Motor neuron (in vitro differentiated cells): ENCODE measurements at regions of chr12 and their contacts with region 1.

Region 1: GRCh38 chr12:54005853-54006686 is 2.7 kb upstream of the HOXC8 start:
- ATAC-seq: peak; percentile 57 to 87 (median 74)
- H3K4me3 ChIP-seq: peak overlapping the region in 2 of 5 donors; percentile 5 to 19
- H3K27ac ChIP-seq: no peak overlapping the region
- H3K4me1 ChIP-seq: peaks cover 10 to 13% of the 10 kb centered on the region in 2 donors

Region 2: GRCh38 chr12:53887006-53887405 is 119.1 kb before region 1 on chr12:
- in situ Hi-C with region 1: no loop called
- ATAC-seq: peak in 1 of 8 experiments; percentile 32
- H3K4me3 ChIP-seq: no peak overlapping the region
- H3K27ac ChIP-seq: no peak overlapping the region
- H3K4me1 ChIP-seq: no peaks in the 10 kb centered on the region

Region 3: DNA sequence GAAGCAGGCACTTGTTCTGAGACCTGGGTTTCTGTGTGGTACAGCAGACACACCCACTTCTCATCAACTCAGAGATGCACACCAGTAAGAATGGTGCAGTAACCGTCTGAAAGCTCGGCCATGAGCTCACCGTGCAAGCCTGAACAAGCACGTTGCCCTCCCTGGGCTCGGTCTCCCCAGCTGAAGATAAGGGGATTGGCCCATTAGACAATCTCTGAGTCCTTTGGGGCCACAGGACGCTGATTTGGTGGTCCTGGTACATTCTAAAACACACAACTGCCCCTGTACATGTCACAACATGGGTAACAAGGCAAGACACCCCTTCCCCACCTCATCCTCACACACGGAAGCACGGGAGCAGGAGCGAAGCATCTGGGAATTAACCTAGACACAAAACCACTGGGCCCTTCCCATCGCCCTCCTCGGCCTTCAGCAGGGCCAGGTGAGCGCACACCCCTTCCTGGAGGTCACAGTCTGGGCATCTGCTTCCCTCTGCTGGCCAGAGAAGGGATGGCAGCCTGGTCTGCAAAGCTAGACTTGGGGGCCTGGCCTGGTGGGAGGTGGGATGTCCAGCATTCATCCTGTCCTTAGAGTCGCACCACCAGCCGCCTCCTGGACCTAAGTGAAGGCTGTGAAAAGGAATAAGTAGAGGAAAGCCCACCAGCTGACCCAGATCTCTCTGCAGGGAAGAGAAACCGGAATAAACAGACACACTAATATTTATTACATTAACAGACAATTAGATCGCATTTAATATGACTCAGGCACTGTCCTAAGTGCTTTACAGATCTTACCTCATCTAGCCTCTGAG is 201.6 kb after region 1 on chr12:
- in situ Hi-C with region 1: loop called in 1 of 9 experiments (anchors 10 kb)
- ATAC-seq: peak; percentile 91 to 99 (median 94)
- H3K4me3 ChIP-seq: no peak overlapping the region
- H3K27ac ChIP-seq: no peak overlapping the region
- H3K4me1 ChIP-seq: peaks cover 0 to 14% of the 10 kb centered on the region in 2 donors

Region 4: DNA sequence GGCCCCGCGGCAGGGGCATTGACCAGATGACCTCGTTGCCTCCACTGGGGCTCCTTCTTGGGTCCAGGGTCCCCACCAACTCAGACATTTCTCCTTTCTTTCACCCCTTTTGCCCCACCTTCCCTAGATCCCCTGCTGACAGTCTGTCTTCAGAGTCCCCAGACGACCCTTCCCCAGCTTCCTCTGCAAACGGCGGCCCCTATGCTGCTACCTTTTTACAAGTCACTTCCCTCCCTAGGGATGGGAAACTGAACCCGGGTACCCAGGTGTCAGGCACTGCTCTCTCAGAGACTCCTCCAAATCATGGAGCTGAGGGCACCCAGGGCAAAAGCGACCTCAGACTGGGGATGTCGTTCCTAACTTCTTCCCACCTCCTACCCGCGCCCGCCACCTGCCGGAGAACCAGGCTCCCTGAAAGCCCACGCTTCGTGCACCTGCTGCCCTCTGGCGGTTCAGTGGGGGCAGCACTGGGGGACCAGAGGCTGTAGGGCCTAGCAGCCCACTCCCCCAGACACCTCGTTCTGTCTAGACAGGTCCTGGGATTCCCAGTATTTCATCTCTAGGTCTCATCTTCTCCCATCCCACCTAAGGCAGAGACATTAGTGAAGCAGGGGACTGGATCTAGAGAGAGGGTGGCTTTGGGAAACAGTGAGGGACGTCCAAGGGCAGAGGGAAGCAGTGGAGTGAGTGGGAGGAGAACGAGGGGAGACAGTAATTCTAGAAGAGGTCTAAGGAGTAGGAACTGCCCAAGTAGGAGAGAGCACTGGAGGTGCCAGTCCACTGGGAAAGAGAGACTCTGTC is 373.5 kb after region 1 on chr12:
- in situ Hi-C with region 1: loop called in 3 of 9 experiments (anchors 25 kb)
- ATAC-seq: peak; percentile 18 to 84 (median 72)
- H3K4me3 ChIP-seq: peak overlapping the region; percentile 44 to 61 (median 51)
- H3K27ac ChIP-seq: no peak overlapping the region
- H3K4me1 ChIP-seq: peaks cover 9% of the 10 kb centered on the region in 2 donors